Activated naive CD4-positive, alpha-beta T cell treated with anti-CD3 and anti-CD28 coated beads for 36 hours (primary cell): ENCODE measurements at regions of chr16 and their contacts with region 1.

Region 1: GRCh38 chr16:10743610-10744393 is at the start of gene NUBP1:
- DNase-seq: peak; percentile 100
- H3K4me3 Mint-ChIP-seq: peak within 1 kb of the TSS; percentile 90
- H3K27ac Mint-ChIP-seq: peak within 1 kb of the TSS; percentile 100
- H3K4me1 Mint-ChIP-seq: peaks cover 26% of the 10 kb centered on the region
- H3K27me3 Mint-ChIP-seq: no peaks in the 10 kb centered on the region
- total RNA-seq, gene NUBP1: 22.3 to 23.0 TPM

Region 2: DNA sequence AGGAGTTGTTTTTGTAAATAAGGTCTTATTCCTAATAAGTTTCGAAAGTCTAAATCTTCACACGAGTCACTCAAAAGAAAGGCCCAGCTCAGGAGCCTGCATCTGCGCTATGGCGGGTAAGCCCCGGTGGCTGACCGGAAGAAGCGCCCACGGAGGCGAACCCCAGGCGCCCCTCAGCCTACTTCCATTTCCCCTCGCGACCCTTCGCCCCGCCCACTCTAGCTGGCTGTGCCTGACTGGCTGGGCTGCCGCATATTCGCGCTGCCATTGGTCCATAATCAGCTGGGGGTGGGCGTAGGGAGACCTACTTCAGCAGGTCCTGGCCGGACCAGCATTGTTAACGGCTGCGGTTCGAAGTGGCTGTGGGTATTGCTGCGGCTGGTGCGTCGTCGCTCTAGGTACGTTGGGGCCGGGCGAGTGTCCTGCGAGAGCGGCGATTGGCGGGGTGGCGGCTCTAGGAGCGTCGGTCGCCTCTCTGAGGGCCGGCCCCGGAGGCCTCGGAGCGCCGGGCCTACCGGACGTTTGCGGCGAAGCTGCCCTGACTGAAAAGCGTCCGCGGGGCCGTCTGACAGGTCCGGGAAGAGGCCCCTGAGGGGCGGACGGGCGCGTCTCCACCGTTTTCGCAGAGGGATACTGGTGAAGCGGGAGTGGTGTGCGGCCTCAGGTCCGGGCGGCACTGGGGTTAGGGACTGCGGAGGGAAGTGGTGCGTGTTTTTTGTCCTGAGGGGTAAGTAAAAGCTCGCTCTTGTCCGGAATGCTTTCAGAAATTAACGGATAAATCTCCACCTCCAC is 357.9 kb before region 1 on chr16 and contains the start of gene ATF7IP2:
- CTCF ChIA-PET with region 1: no interaction called
- intact Hi-C with region 1: loop called (anchors 5 kb)
- DNase-seq: peak; percentile 95
- H3K4me3 Mint-ChIP-seq: peak within 1 kb of the TSS; percentile 96
- H3K27ac Mint-ChIP-seq: peak within 1 kb of the TSS; percentile 95
- H3K4me1 Mint-ChIP-seq: peaks cover 37% of the 10 kb centered on the region
- H3K27me3 Mint-ChIP-seq: no peaks in the 10 kb centered on the region
- total RNA-seq, gene ATF7IP2: 17.6 to 18.4 TPM

Region 3: GRCh38 chr16:10871149-10871991 is 127.6 kb after region 1 on chr16:
- CTCF ChIA-PET with region 1: no interaction called
- intact Hi-C with region 1: loop called (anchors 5 kb)
- DNase-seq: peak; percentile 81
- H3K4me3 Mint-ChIP-seq: no peak overlapping the region
- H3K27ac Mint-ChIP-seq: no peak overlapping the region
- H3K4me1 Mint-ChIP-seq: peaks cover 36% of the 10 kb centered on the region
- H3K27me3 Mint-ChIP-seq: peaks cover 43% of the 10 kb centered on the region

Region 4: DNA sequence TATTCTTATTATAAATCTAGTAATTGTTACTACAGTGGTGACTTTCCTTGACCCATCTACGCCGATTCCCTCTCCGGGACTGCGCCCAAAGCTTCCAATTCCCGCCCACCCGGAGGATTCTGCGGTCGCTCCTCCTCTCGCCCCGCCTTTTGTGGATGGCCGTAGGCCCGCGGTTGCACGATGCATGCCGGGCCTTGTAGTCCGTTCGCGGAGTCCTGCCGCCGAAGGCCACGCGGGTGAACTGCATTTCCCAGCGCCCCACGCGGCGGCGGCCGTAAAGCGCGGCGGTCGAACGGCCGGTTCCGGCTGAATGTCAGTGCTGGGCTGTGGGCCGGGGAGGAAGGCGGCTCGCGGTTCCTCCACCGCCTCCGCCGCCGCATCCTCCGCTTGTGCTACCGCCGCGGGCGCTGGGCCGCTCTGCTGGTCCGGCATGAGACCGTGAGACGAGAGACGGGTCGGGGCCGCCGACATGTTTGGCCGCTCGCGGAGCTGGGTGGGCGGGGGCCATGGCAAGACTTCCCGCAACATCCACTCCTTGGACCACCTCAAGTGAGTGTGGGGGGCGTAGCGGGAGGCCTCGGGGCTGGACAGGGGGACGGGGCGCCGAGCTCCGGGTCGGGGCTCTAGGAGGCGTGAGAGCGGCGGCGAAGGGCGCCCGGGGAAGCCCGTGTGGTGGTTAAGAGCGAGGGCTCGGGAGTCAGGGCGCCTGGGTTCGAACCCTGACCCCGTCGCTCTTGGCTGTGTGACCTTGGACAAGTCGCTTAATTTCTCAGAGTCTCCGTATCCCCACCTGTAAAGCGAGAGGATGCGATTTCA is 200.7 kb after region 1 on chr16 and contains the start of gene CLEC16A:
- CTCF ChIA-PET with region 1: interaction called, 3 read pairs
- intact Hi-C with region 1: loop called (anchors 1 kb)
- DNase-seq: peak; percentile 97
- H3K4me3 Mint-ChIP-seq: peak within 1 kb of the TSS; percentile 81
- H3K27ac Mint-ChIP-seq: peak within 1 kb of the TSS; percentile 70
- H3K4me1 Mint-ChIP-seq: peaks cover 61% of the 10 kb centered on the region
- H3K27me3 Mint-ChIP-seq: no peaks in the 10 kb centered on the region
- total RNA-seq, gene CLEC16A: 18.4 to 20.1 TPM

Region 5: GRCh38 chr16:10954903-10955302 is 211.1 kb after region 1 on chr16:
- CTCF ChIA-PET with region 1: no interaction called
- intact Hi-C with region 1: no loop called
- DNase-seq: no peak
- H3K4me3 Mint-ChIP-seq: no peak overlapping the region
- H3K27ac Mint-ChIP-seq: no peak overlapping the region
- H3K4me1 Mint-ChIP-seq: peaks cover 44% of the 10 kb centered on the region
- H3K27me3 Mint-ChIP-seq: no peaks in the 10 kb centered on the region

Region 6: DNA sequence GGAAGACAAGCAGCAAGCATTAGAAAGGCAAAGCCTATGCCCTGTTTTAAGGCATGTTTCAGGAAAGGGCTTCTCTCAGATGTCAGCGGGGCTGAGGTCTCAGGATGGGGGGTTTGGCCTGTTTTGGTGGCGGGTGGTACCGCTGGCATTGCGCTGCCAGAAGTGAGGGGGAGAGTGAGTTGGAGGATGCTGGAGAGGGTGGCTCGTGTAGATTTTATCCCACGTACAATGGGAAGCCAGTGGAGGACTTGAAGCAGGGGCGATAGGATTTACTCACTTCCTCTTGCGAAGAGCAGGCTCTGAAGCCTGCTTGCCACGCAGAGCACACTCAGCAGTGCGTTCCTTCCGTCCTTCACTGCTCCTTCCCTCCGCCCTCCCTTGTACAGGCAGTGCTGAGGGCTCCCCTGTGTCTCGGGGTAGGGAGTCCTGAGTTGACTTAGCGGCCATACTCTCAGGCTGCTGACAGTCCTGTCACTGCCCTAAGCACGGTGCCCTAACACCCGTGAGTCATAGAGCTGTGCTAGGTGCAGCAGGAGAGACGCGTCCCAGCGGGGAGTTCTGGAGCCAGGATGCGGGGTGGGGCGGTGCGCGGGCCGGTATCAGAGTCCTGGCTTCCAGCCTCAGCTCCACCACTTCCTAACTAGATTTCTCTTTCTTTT is 1345.8 kb after region 1 on chr16:
- CTCF ChIA-PET with region 1: interaction called, 3 read pairs
- intact Hi-C with region 1: loop called (anchors 10 kb)
- DNase-seq: peak; percentile 77
- H3K4me3 Mint-ChIP-seq: peak overlapping the region; percentile 78
- H3K27ac Mint-ChIP-seq: peak overlapping the region; percentile 88
- H3K4me1 Mint-ChIP-seq: peaks cover 35% of the 10 kb centered on the region
- H3K27me3 Mint-ChIP-seq: no peaks in the 10 kb centered on the region